Naive thymus-derived CD4-positive, alpha-beta T cell (primary cell): ENCODE measurements at regions of chr16 and their contacts with region 1.

Region 1: DNA sequence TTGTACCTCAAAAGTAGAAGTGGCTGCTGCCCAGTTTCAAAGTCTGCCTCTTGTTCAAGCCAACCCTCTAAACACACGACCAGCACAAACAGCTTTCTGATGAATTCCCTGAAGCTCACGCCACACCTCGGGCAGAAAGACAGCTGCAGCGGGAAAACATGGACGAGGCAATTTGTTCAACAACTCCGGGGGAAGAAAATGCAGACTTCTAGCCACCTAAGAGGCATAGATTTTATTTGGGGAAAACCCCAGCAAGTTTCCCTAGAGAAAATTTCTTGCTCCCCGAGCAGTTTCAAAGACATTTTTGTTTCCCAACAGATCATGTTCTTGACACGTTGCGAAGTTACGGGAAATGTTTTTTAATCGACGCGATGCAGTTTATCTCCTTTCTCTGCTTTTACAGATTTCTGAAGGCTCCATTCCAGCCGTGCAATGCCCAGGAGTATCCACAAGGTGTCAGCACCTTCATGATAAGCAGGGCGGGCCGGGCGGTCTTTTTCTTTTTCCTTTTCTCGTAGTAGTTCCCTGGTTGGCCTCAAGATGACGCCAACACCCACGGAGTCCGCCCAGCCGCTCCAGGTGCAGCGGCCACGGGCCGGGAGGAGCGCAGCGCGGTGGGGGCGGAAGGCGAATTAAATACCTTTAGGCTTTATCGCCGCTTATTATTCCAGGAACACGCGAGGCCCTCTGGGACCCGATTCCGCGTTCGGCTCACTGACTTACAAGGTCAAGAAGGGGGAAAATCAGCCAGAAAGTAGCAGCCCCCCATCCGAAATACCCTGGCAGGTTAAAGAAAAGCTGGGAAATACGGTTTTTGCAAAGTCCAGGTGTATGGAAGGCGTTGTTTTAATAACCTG is 2.9 kb upstream of the FOXC2 start:
- DNase-seq: peak; percentile 57 to 85 (median 81)
- ATAC-seq: peak; percentile 100
- H3K4me3 ChIP-seq: no peak overlapping the region
- H3K4me3 Mint-ChIP-seq: peak overlapping the region; percentile 45 to 86 (median 72)
- H3K27ac ChIP-seq: no peak overlapping the region
- H3K27ac Mint-ChIP-seq: peak overlapping the region in 2 of 9 donors; percentile 18 to 45
- H3K4me1 ChIP-seq: peaks cover 8 to 12% of the 10 kb centered on the region in 2 donors
- H3K4me1 Mint-ChIP-seq: peaks cover 10 to 37% (median 17%) of the 10 kb centered on the region in 7 donors
- H3K27me3 ChIP-seq: peaks cover 14 to 20% of the 10 kb centered on the region in 2 donors
- H3K27me3 Mint-ChIP-seq: peaks cover 40 to 48% (median 46%) of the 10 kb centered on the region in 5 donors

Region 2: DNA sequence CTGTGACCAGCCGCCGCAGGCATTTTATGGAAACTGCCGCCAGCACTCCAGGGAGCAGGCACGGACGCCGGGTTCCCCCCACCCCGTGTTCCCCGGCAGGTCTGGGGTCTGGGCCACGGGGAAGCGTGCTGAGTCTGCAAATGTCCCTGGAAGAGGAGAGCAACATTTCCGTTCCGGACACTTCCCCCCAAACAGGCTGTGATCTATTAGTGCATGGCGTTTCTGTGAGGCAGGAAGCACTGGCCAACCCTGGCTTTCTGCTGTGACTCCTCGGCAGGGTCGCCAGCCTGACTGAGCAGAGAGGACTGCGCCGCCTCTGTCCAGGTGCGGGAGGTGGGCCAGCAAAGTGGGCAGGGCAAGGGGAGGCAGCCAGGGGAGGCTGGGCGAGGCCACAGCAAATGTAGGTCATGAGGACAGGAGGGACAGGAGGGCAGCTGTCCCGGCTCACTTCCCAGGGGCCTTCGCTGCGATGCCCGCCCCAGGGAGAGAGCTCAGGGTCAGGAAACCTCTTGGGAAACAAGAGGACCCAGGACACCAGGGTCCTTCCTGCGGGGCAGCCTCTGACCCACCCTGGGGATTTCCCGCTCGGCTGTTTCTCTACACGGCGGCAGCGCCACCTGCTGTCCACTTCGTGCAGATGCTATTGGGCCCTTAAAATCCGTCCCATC is 43.9 kb before region 1 on chr16:
- CTCF ChIA-PET with region 1: no interaction called
- POLR2A ChIA-PET with region 1: no interaction called
- intact Hi-C with region 1: loop called in 1 of 2 experiments (anchors 5 kb)
- DNase-seq: peak in 8 of 9 donors; percentile 22 to 71 (median 30)
- ATAC-seq: peak; percentile 78
- H3K4me3 ChIP-seq: no peak overlapping the region
- H3K4me3 Mint-ChIP-seq: peak overlapping the region in 7 of 10 donors; percentile 29 to 77 (median 38)
- H3K27ac ChIP-seq: no peak overlapping the region
- H3K27ac Mint-ChIP-seq: no peak overlapping the region
- H3K4me1 ChIP-seq: peaks cover 0 to 3% of the 10 kb centered on the region in 2 donors
- H3K4me1 Mint-ChIP-seq: peaks cover 0 to 9% (median 3%) of the 10 kb centered on the region in 7 donors
- H3K27me3 ChIP-seq: peaks cover 0 to 15% of the 10 kb centered on the region in 2 donors
- H3K27me3 Mint-ChIP-seq: peaks cover 31 to 49% (median 49%) of the 10 kb centered on the region in 5 donors

Region 3: DNA sequence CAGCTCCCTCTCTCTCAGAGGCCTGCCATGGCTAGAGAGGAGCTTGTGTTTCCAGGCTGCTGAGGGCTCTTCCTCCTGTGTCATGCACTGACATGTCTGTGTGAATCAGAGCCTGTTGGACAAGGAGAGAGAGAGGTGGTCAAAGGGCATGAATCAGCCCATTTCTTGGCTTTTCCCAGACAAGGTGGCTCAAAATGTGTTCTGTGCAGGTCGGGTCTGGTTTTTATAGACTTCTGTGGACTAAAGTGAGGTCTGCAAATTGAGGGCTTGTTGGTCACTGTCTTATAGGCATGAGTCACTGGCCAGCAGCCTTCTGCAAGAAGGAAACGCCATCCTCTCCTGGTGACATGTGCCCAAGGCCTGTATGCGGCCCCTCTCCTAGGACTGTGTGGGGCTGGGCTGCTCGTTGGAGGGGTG is 112.5 kb after region 1 on chr16:
- CTCF ChIA-PET with region 1: no interaction called
- POLR2A ChIA-PET with region 1: no interaction called
- intact Hi-C with region 1: no loop called
- DNase-seq: no peak
- ATAC-seq: no peak
- H3K4me3 ChIP-seq: no peak overlapping the region
- H3K4me3 Mint-ChIP-seq: no peak overlapping the region
- H3K27ac ChIP-seq: no peak overlapping the region
- H3K27ac Mint-ChIP-seq: no peak overlapping the region
- H3K4me1 ChIP-seq: no peaks in the 10 kb centered on the region
- H3K4me1 Mint-ChIP-seq: no peaks in the 10 kb centered on the region
- H3K27me3 ChIP-seq: no peaks in the 10 kb centered on the region
- H3K27me3 Mint-ChIP-seq: peaks cover 0 to 18% (median 8%) of the 10 kb centered on the region in 5 donors

Region 4: DNA sequence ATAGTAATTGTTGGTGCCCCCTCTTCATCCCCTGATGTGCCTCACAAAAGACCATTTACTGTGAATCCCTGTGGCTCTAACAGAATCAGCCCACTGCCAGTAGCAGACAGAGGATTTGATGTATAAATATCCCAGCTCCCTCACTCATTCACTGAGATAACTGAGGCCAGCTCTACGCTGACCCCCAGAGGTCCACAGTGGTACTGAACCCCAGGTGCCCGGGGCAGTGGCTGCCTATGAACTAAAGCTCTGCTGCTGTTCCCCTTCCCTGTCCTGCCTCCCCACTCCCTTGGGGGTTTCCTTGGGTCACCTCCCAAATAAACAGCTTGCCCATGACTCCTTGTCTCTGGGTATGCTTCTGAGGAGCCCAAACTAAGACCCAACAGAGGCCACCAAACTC is 310.4 kb after region 1 on chr16:
- CTCF ChIA-PET with region 1: no interaction called
- POLR2A ChIA-PET with region 1: no interaction called
- intact Hi-C with region 1: loop called in 1 of 2 experiments (anchors 1 kb)
- DNase-seq: peak in 1 of 9 donors; percentile 45
- ATAC-seq: no peak
- H3K4me3 ChIP-seq: no peak overlapping the region
- H3K4me3 Mint-ChIP-seq: no peak overlapping the region
- H3K27ac ChIP-seq: no peak overlapping the region
- H3K27ac Mint-ChIP-seq: no peak overlapping the region
- H3K4me1 ChIP-seq: no peaks in the 10 kb centered on the region
- H3K4me1 Mint-ChIP-seq: peaks cover 0 to 2% (median 0%) of the 10 kb centered on the region in 7 donors
- H3K27me3 ChIP-seq: no peaks in the 10 kb centered on the region
- H3K27me3 Mint-ChIP-seq: peaks cover 20 to 54% (median 35%) of the 10 kb centered on the region in 5 donors

Region 5: GRCh38 chr16:87076950-87077749 is 513.4 kb after region 1 on chr16:
- CTCF ChIA-PET with region 1: no interaction called
- POLR2A ChIA-PET with region 1: no interaction called
- intact Hi-C with region 1: loop called in 1 of 2 experiments (anchors 5 kb)
- DNase-seq: peak in 1 of 9 donors; percentile 46
- ATAC-seq: peak; percentile 46
- H3K4me3 ChIP-seq: no peak overlapping the region
- H3K4me3 Mint-ChIP-seq: no peak overlapping the region
- H3K27ac ChIP-seq: no peak overlapping the region
- H3K27ac Mint-ChIP-seq: no peak overlapping the region
- H3K4me1 ChIP-seq: no peaks in the 10 kb centered on the region
- H3K4me1 Mint-ChIP-seq: no peaks in the 10 kb centered on the region
- H3K27me3 ChIP-seq: no peaks in the 10 kb centered on the region
- H3K27me3 Mint-ChIP-seq: peaks cover 0 to 14% (median 3%) of the 10 kb centered on the region in 5 donors

Region 6: GRCh38 chr16:87297918-87298631 is 734.4 kb after region 1 on chr16:
- CTCF ChIA-PET with region 1: no interaction called
- POLR2A ChIA-PET with region 1: no interaction called
- intact Hi-C with region 1: loop called (anchors 1 to 5 kb)
- DNase-seq: peak in 5 of 9 donors; percentile 15 to 33 (median 20)
- ATAC-seq: peak; percentile 44
- H3K4me3 ChIP-seq: no peak overlapping the region
- H3K4me3 Mint-ChIP-seq: no peak overlapping the region
- H3K27ac ChIP-seq: no peak overlapping the region
- H3K27ac Mint-ChIP-seq: peak overlapping the region in 4 of 9 donors; percentile 33 to 77 (median 60)
- H3K4me1 ChIP-seq: no peaks in the 10 kb centered on the region
- H3K4me1 Mint-ChIP-seq: peaks cover 0 to 15% (median 4%) of the 10 kb centered on the region in 7 donors
- H3K27me3 ChIP-seq: no peaks in the 10 kb centered on the region
- H3K27me3 Mint-ChIP-seq: peaks cover 0 to 4% (median 0%) of the 10 kb centered on the region in 5 donors